Naive thymus-derived CD8-positive, alpha-beta T cell (primary cell): ENCODE measurements at regions of chr18 and their contacts with region 1.

Region 1: DNA sequence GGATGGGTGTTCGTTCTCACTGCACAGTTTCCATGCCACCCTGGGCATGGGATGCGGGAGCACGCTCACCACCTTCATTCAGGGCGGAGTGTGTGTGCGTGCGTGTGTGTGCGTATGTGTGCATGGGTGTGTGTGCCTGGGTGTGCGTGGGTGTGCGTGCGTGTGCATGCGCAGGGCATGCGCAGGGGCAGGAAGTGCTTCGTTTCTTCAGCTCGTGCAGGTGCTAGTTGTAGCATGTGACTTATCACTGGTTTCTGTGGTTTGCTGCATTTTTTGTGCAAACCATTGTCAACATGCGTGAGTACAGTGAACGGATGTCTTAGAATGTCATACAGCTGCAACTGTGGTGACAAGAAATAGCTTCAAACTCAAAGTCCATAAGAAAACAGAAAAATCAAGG is 179.5 kb downstream of the PTGR3 start:
- DNase-seq: peak in 6 of 10 donors; percentile 4 to 52 (median 34)
- ATAC-seq: peak; percentile 17 to 81
- H3K4me3 Mint-ChIP-seq: peak overlapping the region in 8 of 10 donors; percentile 3 to 66 (median 37)
- H3K27ac Mint-ChIP-seq: peak overlapping the region; percentile 19 to 91 (median 71)
- H3K4me1 Mint-ChIP-seq: peaks cover 13 to 33% (median 21%) of the 10 kb centered on the region in 4 donors
- H3K27me3 Mint-ChIP-seq: no peaks in the 10 kb centered on the region

Region 2: DNA sequence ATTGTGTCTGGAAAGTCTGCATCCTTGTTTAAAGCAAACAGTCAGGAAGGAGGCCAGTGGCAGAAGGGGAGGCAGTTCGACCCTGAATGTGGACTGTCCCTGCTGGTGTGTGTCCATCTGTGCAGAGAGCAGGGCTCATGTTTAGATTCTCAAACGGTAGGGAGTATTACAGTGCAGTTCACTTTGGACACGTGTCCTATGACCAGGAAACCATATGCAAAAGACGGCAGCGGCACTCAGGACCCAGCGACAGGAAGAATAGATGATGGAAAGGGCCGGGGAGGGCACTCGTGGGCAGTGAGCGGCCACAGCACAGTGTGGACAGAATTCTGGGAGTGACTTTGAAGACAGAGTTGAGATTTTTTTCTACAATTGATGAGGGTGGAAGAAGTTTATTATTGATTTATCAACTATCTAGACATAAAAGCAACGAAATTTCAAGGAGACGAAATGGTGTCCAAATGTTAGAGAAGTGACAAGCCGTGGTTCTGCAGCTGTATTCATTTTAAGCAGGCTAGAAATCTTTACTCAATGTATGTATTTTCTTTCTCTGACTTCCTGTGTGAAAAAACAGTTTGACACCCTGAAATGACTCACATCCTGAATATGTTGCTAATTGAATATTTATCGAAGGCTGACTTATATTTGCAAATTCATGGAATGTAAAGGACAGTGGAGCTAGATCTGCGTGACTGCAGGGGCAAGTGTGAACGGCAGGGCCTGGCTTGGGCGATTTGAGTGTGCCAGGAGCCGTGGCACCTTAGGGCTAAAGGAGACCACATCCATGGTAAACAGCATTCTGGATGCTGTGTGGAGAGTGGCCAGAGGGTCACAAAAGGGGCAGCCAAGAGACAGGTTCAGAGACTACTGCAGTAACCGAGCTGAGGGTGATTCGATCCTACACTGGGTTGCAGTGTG is 34.7 kb before region 1 on chr18:
- POLR2A ChIA-PET with region 1: no interaction called
- DNase-seq: peak in 1 of 10 donors; percentile 26
- ATAC-seq: no peak
- H3K4me3 Mint-ChIP-seq: peak overlapping the region in 9 of 10 donors; percentile 1 to 80 (median 42)
- H3K27ac Mint-ChIP-seq: peak overlapping the region; percentile 47 to 92 (median 77)
- H3K4me1 Mint-ChIP-seq: peaks cover 21 to 59% (median 39%) of the 10 kb centered on the region in 4 donors
- H3K27me3 Mint-ChIP-seq: no peaks in the 10 kb centered on the region

Region 3: DNA sequence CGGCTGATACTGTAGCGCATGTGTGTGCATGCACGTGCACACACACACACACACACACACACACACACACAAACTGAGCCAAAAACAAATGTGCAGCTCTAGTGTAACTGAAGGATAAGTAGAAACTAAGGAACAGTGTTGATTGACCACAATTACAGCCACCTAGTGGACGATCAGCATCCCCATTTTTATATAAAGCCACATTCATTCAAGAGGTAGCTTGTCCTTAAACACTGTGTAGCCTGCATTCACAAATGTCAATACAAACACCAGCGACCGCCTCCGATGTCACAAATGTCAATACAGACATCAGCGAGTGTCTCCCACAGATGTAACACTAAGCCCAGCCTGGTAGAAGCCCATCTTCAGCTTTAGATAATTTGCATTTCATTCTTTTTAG is 12.1 kb after region 1 on chr18:
- POLR2A ChIA-PET with region 1: no interaction called
- DNase-seq: no peak
- ATAC-seq: no peak
- H3K4me3 Mint-ChIP-seq: no peak overlapping the region
- H3K27ac Mint-ChIP-seq: peak overlapping the region in 1 of 10 donors; percentile 4
- H3K4me1 Mint-ChIP-seq: no peaks in the 10 kb centered on the region
- H3K27me3 Mint-ChIP-seq: no peaks in the 10 kb centered on the region

Region 4: DNA sequence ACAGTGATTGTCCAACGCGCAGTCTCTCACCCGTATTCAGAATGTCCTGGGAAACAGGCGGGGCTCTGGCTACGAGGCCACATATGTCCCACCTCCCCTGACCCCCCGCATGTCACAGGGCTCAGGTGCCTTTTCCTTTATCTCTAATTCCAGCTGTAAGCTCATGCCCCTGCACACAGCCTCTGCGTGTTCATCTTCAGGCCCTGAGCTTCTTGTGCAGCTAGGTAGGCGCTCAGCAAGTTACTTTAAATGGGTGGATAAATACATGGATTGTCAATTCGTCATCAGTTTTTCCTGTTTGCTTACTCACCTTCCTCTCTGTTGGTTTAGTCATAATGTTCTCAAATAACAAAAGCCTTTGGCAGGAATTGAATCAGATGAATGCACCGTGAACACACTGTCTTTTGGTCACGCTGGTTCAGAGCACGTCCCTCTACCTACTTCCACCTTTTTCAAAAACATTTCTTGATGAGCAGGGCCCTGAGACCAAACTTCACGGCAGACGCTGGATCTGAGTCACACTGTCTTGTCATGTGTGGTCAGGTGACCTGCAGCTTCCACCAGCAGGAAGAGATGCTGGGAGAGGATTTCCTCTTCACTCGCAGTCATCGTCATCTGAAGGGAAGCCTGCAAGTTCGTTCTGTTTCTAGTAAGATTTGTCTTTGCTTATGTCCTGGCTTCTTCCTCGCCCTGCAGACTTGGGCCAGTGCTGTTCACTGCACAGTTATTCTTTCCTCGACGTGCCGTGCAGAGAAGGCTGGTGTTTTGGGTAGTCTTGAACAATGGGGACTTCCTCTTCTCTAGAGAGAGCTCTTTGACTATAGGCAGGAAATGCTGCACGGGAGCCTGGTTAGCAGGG is 41.4 kb after region 1 on chr18:
- POLR2A ChIA-PET with region 1: interaction called, 10 read pairs
- DNase-seq: peak in 9 of 10 donors; percentile 36 to 83 (median 58)
- ATAC-seq: peak; percentile 85 to 87
- H3K4me3 Mint-ChIP-seq: peak overlapping the region; percentile 76 to 93 (median 90)
- H3K27ac Mint-ChIP-seq: peak overlapping the region; percentile 92 to 100 (median 96)
- H3K4me1 Mint-ChIP-seq: peaks cover 25 to 54% (median 40%) of the 10 kb centered on the region in 4 donors
- H3K27me3 Mint-ChIP-seq: no peaks in the 10 kb centered on the region

Region 5: DNA sequence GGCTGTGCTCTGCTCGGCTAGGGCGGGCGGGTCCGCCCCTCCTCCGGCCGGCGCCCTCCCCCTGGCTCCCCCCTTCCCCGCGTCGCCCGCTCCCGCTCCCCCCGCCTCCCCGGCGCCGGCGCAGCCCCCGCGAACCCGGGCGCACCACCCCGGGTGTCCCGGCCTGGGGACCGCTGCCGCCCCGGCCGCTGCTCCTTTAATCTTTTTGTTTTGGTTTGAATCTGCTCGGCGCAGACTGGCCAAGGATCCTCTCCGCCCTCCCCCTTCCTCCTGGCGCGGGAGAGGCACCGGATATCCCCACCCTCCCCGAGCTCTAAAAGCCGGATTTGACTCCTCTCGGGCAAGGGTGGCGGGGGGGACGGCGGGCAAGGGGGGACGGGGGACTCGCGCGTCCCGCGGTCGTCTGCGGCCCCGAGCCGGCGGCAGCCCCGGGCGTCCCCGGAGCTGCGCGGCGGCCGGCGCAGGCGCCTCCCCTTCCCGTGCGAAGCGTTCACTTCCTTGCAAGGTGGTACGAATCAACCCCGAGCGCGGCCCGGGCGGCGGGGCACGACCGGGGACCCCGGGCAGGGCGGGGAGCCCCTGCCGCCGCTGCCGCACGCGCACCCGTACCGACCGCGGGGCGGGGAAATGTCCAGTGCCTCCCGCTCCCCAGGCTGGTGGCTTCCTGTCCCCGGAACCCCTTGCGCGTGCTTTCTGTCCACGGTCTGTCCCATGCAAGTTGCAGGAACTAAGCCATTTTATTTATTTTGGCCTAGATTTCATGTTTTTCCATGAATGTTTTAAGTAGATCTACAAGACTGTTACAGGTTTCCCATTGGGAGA is 179.9 kb after region 1 on chr18 and contains the start of gene PTGR3:
- POLR2A ChIA-PET with region 1: no interaction called
- DNase-seq: peak; percentile 49 to 85 (median 68)
- ATAC-seq: peak; percentile 48 to 58
- H3K4me3 Mint-ChIP-seq: peak within 1 kb of the TSS; percentile 95 to 100 (median 98)
- H3K27ac Mint-ChIP-seq: peak within 1 kb of the TSS; percentile 93 to 99 (median 97)
- H3K4me1 Mint-ChIP-seq: peaks cover 39 to 64% (median 59%) of the 10 kb centered on the region in 4 donors
- H3K27me3 Mint-ChIP-seq: no peaks in the 10 kb centered on the region
- polyA plus RNA-seq, gene PTGR3: 14.7 to 28.5 (median 19.6) TPM

Region 6: GRCh38 chr18:75293591-75293990 is 264.1 kb after region 1 on chr18:
- POLR2A ChIA-PET with region 1: no interaction called
- DNase-seq: no peak
- ATAC-seq: no peak
- H3K4me3 Mint-ChIP-seq: no peak overlapping the region
- H3K27ac Mint-ChIP-seq: peak overlapping the region in 2 of 10 donors; percentile 7 to 61
- H3K4me1 Mint-ChIP-seq: peaks cover 0 to 10% (median 0%) of the 10 kb centered on the region in 4 donors
- H3K27me3 Mint-ChIP-seq: no peaks in the 10 kb centered on the region